Breast epithelium (tissue), 4 donors: ENCODE measurements at regions of chr1 and their contacts with region 1.

Region 1: DNA sequence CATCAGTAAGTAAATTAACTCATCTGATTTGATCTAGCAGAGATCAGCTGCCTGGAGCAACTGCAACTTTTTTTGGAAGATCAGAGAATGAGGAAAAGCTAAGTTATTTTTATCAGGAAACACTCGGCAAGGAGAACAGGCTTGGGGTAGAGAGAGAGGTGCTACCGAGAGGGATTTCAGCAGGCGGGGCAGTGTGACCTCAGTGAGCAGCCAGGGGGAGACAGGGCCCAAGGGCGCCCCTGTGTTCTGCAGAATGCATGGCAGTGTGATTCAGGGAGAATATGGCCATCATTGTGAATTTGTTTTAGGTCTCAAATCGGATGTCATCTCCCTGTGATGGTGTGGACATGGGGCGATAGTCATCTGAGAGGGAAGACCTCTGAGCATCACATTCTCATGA is 484.1 kb upstream of the VAMP3 start:
- DNase-seq: no peak
- H3K4me3 ChIP-seq: no peak overlapping the region
- H3K27ac ChIP-seq: no peak overlapping the region
- H3K4me1 ChIP-seq: no peaks in the 10 kb centered on the region
- H3K27me3 ChIP-seq: no peaks in the 10 kb centered on the region
- CTCF ChIP-seq: no peak
- POLR2A ChIP-seq: no peak

Region 2: GRCh38 chr1:7356079-7356478 is 69.1 kb after region 1 on chr1:
- intact Hi-C with region 1: loop called (anchors 2 kb)
- DNase-seq: no peak
- H3K4me3 ChIP-seq: no peak overlapping the region
- H3K27ac ChIP-seq: no peak overlapping the region
- H3K4me1 ChIP-seq: no peaks in the 10 kb centered on the region
- H3K27me3 ChIP-seq: no peaks in the 10 kb centered on the region
- CTCF ChIP-seq: no peak
- POLR2A ChIP-seq: no peak

Region 3: DNA sequence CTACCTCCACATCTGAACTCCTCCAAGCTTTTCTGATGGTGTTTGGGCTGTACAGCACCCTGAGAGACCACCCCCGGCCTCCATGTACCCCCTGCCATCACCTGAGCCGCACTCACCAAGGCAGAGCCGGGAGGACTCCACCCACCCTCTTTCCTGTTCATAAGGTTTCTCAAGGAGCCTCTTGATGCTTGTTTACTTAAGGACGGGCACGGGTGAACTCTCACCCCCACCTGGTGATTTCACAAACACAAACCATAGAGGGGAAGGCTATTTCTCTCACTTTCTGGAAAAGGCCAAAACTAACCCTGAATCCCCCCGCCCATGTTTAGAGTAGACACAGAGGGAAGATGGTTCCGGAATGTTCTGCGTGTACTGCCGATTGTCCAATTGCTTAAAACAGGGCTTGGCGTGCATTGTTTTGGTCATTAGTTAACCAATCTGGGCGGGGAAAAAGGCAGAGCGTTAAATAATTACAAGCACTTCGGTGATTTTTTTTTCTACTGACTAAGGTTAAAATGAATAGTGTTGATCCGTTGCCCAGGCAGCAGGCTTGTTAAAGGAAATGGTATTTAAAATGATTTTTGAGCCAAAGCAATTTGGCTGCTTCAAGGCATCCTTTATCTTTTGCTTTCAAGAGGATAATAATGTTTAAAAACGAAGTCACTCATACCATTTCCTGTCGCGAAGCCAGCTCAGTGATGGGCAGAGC is 204.2 kb after region 1 on chr1:
- intact Hi-C with region 1: no loop called
- DNase-seq: no peak
- H3K4me3 ChIP-seq: peak overlapping the region in 1 of 3 donors; percentile 37
- H3K27ac ChIP-seq: peak overlapping the region; percentile 52 to 78
- H3K4me1 ChIP-seq: no peaks in the 10 kb centered on the region
- H3K27me3 ChIP-seq: no peaks in the 10 kb centered on the region
- CTCF ChIP-seq: no peak
- POLR2A ChIP-seq: no peak